ENCODE measurements at regions of chr12 and their contacts with region 1.

Region 1: GRCh38 chr12:65556681-65557437 is 267.4 kb upstream of the HMGA2 start:
- DNase-seq: peak; percentile 23
- H3K4me3 Mint-ChIP-seq: no peak overlapping the region
- H3K27ac Mint-ChIP-seq: no peak overlapping the region
- H3K4me1 Mint-ChIP-seq: peaks cover 7% of the 10 kb centered on the region
- H3K27me3 Mint-ChIP-seq: peaks cover 9% of the 10 kb centered on the region

Region 2: DNA sequence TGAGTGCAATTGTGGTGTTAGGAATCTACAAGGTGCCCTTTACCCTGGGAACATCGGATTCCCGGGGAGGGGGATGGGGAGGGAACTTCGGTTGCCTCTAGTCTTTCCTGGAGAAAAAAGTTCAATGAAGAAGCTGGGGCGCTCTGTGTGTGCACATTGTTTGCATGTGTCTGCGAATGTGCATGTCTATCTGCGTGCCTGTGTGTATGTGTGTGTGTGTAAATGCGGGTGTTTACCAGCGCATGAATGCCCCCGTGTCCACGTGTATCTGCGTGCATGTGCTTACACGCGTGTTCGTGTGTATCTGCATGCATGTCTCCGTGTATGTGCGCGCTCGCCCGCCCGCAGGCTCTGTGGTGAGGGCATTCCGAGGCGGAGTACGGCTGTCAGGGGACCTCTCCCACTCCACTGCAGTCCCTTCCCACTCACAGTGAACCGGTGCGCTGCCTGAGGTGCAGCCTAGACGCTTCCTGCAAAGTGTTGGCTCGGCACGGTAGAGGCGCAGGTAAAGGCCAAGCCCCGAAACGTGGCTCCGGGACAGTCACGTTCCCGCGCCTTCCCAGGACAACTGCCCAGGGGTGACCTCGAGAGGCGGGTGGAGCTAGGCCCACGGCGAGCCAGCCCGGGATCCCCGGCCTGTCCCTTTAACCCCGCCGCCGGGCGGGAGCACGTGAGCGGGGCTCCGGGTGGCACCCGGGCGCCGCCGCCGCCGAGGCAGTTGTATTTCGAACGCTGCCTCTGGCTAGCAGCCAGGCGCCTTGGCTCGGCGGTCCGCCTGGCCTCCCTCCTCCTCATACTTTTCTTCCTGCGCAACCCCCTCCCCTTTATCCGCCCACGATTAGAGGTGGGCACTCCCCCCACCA is 266.9 kb after region 1 on chr12:
- intact Hi-C with region 1: loop called (anchors 5 kb)
- DNase-seq: no peak
- H3K4me3 Mint-ChIP-seq: peak overlapping the region; percentile 53
- H3K27ac Mint-ChIP-seq: no peak overlapping the region
- H3K4me1 Mint-ChIP-seq: peaks cover 15% of the 10 kb centered on the region
- H3K27me3 Mint-ChIP-seq: peaks cover 56% of the 10 kb centered on the region

Region 3: DNA sequence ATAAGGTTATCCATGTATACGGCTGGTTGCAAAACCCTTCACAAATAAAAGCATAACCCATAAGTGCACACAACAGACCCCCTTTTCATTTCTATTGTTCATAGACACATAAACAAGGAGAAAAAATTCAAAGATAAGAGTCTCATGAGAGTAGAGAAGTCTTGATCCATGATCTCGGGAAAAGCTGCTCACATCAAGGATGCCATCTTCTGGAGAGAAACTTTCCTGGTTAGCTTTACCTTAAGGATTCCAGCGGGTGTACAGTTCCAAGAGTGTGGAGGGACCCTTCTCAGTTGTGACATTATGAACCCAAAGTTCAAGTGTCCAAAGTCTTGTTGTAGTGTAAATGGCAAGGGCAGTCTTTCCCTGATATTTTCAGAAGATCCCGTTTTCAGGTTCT is 429.2 kb after region 1 on chr12:
- intact Hi-C with region 1: loop called (anchors 1 kb)
- DNase-seq: no peak
- H3K4me3 Mint-ChIP-seq: no peak overlapping the region
- H3K27ac Mint-ChIP-seq: no peak overlapping the region
- H3K4me1 Mint-ChIP-seq: no peaks in the 10 kb centered on the region
- H3K27me3 Mint-ChIP-seq: peaks cover 10% of the 10 kb centered on the region

Region 4: DNA sequence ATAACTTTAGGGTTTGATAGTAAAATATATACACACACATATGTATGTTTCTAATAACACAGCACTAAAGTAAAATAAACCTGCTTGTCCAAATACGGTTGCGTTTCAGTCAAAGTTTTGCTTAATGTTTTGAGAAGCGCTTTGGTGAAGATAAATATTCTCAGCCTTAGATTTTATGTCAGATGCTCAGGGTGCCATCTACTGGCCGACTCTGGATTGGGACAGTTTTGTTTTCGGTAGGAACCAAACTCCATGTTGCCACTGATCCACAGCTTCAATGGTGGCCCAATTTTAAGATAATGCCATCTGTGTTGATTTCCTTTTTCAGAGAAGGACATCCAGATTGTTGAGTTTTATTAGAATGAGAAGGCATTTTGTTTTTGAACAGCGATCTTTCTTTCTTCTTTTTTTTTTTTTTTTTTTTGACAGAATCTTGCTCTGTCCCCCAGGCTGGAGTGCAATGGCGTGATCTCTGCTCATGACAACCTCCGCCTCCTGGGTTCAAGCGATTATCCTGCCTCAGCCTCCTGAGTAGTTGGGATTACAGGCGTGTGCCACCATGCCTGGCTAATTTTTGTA is 530.6 kb after region 1 on chr12:
- intact Hi-C with region 1: loop called (anchors 1 kb)
- DNase-seq: peak; percentile 22
- H3K4me3 Mint-ChIP-seq: no peak overlapping the region
- H3K27ac Mint-ChIP-seq: no peak overlapping the region
- H3K4me1 Mint-ChIP-seq: no peaks in the 10 kb centered on the region
- H3K27me3 Mint-ChIP-seq: peaks cover 25% of the 10 kb centered on the region

Region 5: DNA sequence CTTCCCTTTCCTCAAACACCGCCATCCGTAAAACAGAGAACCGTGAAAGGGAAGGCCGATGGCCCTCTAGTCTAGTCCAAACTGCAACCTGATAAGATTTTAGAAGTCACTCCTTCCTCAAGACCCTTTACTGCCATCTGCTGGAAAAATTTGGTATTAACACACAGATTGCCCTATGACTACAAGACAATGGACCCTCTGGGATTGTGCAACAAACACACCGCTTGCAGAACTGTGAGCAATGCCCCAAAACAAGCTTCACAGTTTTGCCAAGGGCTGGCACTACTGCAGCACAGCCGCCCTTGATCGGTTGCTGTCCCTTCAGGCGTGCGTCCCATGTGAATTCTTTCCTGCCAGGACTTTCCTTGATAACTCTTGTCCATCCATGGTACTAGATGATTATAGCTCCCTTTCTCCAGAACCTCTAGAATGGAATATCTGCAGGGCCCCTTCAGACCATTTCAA is 550.6 kb after region 1 on chr12:
- intact Hi-C with region 1: loop called (anchors 1 kb)
- DNase-seq: peak; percentile 43
- H3K4me3 Mint-ChIP-seq: no peak overlapping the region
- H3K27ac Mint-ChIP-seq: no peak overlapping the region
- H3K4me1 Mint-ChIP-seq: peaks cover 16% of the 10 kb centered on the region
- H3K27me3 Mint-ChIP-seq: peaks cover 14% of the 10 kb centered on the region